Mammary epithelial cell (primary cell): ENCODE measurements at regions of chr6 and their contacts with region 1.

Region 1: DNA sequence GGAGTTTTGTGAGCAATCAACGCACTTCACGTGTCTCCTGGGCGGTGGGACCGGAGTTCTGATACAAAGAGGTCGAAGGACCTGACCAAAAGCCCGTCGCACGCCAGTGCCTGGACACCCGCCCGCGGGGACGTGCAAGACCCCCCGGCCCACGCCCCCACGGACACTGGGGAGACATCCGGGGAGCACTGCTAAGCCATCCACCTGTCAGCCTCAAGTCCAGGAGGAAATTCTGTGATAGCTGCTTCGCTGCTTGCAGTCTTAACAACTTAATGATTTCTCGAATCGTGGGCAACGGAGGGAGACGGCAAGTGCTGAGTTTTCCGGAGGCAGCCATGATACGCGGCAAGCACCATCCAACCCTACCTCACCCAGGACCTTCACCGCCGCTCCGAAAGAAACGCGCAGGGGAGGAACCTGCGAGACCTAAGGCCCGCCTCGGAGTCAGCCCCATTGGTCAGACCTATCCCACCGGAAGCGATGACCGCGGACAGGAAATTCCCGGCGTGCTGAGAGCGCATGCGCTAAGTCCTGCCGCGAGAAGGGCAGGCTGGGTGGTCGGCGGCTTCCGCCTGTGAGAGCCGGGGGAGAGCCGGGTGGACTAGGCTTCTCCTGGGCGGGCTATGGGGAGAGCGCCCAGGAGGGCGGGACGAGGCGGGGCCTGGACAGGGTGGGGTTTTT is at the start of gene TFB1M:
- DNase-seq: peak; percentile 99
- H3K4me3 ChIP-seq: peak within 1 kb of the TSS; percentile 80 to 97 (median 84)
- H3K27ac ChIP-seq: peak within 1 kb of the TSS; percentile 88
- H3K4me1 ChIP-seq: peaks cover 24% of the 10 kb centered on the region
- H3K27me3 ChIP-seq: no peaks in the 10 kb centered on the region
- CTCF ChIP-seq: no peak
- total RNA-seq, gene TFB1M: 17.0 to 42.7 TPM

Region 2: GRCh38 chr6:155351273-155352129 is 37.3 kb after region 1 on chr6:
- CTCF ChIA-PET with region 1: no interaction called
- dilution Hi-C with region 1: no loop called
- in situ Hi-C with region 1: no loop called
- intact Hi-C with region 1: no loop called
- DNase-seq: no peak
- H3K4me3 ChIP-seq: no peak overlapping the region
- H3K27ac ChIP-seq: no peak overlapping the region
- H3K4me1 ChIP-seq: no peaks in the 10 kb centered on the region
- H3K27me3 ChIP-seq: no peaks in the 10 kb centered on the region
- CTCF ChIP-seq: no peak

Region 3: DNA sequence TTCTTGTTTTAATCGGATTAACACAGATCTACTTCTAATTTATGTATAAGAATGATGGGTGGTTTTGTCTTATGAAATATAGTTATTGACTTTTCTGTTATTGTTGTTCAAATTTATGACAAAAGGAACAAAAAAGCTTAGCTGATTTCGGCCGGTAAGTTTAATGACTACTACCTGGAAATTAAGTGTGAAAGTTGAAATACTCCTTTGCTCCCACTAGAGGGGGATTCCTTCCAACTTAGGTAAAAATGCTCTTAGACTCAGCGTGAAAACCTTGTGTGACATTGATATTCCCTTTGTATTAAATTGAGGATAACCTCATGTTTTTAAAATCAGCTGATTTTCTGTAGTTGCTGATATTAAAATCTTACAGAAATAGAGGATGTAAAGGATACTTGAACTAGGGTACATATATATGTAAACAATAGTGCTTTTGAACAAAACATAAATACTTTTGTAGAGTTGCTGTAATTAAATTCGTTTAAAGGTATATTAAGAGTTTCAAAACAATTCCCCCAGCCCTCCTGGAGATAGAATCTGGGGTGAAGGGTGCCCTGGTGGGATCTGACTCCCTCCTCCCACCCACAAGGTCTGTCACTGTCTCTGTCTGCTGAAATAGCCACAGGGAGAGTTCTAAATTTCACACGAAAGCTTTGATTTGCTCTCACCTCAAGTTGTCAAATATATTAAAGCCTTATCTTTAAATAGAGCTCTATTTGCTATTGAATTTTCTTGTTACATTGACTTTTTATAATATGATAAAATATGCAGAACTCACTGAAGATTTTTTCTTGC is 1720.4 kb after region 1 on chr6:
- CTCF ChIA-PET with region 1: no interaction called
- dilution Hi-C with region 1: no loop called
- in situ Hi-C with region 1: no loop called
- intact Hi-C with region 1: loop called (anchors 10 kb)
- DNase-seq: peak; percentile 58
- H3K4me3 ChIP-seq: peak overlapping the region in 2 of 3 experiments; percentile 25 to 71
- H3K27ac ChIP-seq: peak overlapping the region; percentile 93
- H3K4me1 ChIP-seq: peaks cover 47% of the 10 kb centered on the region
- H3K27me3 ChIP-seq: no peaks in the 10 kb centered on the region
- CTCF ChIP-seq: peak; percentile 59 to 76